ENCODE measurements at regions of chr3 and their contacts with region 1.

Region 1: GRCh38 chr3:48716982-48717746 is at the start of gene IP6K2:
- DNase-seq: peak; percentile 92 to 99 (median 97)
- ATAC-seq: peak; percentile 100
- H3K4me3 ChIP-seq: peak within 1 kb of the TSS; percentile 99
- H3K4me3 Mint-ChIP-seq: peak within 1 kb of the TSS; percentile 94 to 99 (median 98)
- H3K27ac ChIP-seq: peak within 1 kb of the TSS; percentile 84
- H3K27ac Mint-ChIP-seq: peak within 1 kb of the TSS; percentile 83 to 99 (median 96)
- H3K4me1 ChIP-seq: peaks cover 23 to 29% of the 10 kb centered on the region in 2 donors
- H3K4me1 Mint-ChIP-seq: peaks cover 33 to 46% (median 39%) of the 10 kb centered on the region in 7 donors
- H3K27me3 ChIP-seq: no peaks in the 10 kb centered on the region
- H3K27me3 Mint-ChIP-seq: peaks cover 0 to 22% (median 0%) of the 10 kb centered on the region in 5 donors
- total RNA-seq, gene IP6K2: 72.0 to 94.3 (median 85.9) TPM

Region 2: DNA sequence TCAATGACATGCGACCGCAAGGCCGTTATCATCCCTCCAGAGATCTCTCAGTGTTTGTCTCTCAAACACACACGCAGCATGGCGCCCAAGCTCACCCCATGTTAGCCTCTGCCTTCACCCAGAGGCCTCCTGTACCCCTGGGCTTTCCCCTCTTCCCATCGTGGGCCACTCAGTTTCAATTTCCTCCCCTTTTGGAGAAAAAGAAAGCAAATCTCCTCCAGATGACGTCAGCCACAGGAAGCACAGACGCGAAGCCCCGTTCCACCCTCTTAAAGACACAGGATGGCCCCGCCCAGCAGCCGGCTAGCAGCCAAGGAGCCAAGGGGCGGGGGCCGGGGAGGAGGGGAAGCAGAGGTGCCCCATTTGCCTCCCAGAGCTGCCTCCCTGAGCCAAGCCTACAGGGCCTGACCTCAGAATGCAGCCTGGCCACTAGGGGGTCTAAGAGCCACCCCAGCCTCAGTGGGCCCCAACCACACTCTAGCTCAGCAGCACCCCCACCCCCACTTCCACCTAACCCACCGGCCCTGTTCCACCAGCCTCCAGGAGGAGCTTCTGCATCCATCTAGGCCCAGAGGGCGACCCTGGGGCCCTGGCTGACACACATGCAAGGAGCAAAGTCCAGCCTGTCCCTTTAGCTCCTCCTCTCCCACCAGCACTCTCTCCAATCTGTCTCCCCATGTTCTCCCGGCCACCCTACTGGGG is 244.1 kb before region 1 on chr3:
- CTCF ChIA-PET with region 1: no interaction called
- POLR2A ChIA-PET with region 1: no interaction called
- intact Hi-C with region 1: no loop called
- DNase-seq: peak; percentile 79 to 98 (median 95)
- ATAC-seq: peak; percentile 93
- H3K4me3 ChIP-seq: peak overlapping the region; percentile 92
- H3K4me3 Mint-ChIP-seq: peak overlapping the region; percentile 87 to 100 (median 94)
- H3K27ac ChIP-seq: peak overlapping the region; percentile 95
- H3K27ac Mint-ChIP-seq: peak overlapping the region; percentile 90 to 100 (median 99)
- H3K4me1 ChIP-seq: peaks cover 46 to 54% of the 10 kb centered on the region in 2 donors
- H3K4me1 Mint-ChIP-seq: peaks cover 41 to 75% (median 64%) of the 10 kb centered on the region in 7 donors
- H3K27me3 ChIP-seq: no peaks in the 10 kb centered on the region
- H3K27me3 Mint-ChIP-seq: peaks cover 0 to 2% (median 0%) of the 10 kb centered on the region in 5 donors

Region 3: DNA sequence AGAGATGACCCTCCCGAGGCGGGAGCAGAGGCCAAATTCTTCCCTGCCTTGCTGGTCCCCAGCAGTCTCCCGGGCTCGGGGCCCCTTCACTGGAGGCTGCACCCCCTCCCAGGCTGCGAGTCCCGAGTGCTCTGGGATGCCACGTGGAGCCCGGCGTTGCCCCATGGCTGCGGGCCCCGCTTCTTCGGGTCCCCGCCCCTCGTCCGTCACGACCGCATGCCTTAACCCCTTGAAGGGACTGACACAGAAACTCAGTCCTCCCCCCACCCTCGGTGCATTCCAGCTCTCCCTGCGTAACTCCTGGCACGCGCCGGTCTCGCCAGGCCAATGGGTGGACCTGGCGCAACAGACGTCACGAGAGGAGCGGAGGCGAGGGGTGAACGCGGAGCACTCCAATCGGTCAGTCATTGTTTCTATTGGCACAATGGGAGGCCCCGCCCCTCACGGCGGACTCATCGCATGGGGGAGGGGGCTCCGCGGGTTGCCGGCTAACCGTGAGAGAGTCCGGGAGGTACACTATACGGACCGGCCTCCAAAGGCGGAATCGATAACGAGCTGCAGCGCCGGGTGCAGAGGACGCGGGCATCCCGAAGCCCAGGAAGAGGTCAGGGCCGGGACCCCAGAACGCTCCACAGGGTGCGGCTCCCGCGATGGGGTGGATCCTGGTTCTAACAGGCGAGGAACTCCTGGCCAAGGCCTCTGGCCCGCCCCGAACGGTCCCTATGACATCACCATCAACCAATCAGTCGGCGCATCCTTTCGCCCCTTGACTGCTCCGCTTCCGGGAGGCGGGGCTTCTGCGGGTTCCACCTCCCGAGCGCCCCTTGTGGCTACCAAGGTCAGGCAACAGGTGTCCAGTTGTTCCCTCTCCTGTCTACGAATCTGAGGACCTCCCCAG is 53.5 kb before region 1 on chr3:
- CTCF ChIA-PET with region 1: interaction called, 4 read pairs
- POLR2A ChIA-PET with region 1: no interaction called
- intact Hi-C with region 1: loop called (anchors 2 kb)
- DNase-seq: peak; percentile 50 to 94 (median 61)
- ATAC-seq: peak; percentile 88
- H3K4me3 ChIP-seq: peak overlapping the region; percentile 70
- H3K4me3 Mint-ChIP-seq: peak overlapping the region; percentile 34 to 89 (median 70)
- H3K27ac ChIP-seq: no peak overlapping the region
- H3K27ac Mint-ChIP-seq: peak overlapping the region in 1 of 9 donors; percentile 91
- H3K4me1 ChIP-seq: peaks cover 12 to 15% of the 10 kb centered on the region in 2 donors
- H3K4me1 Mint-ChIP-seq: peaks cover 0 to 29% (median 15%) of the 10 kb centered on the region in 7 donors
- H3K27me3 ChIP-seq: peaks cover 0 to 15% of the 10 kb centered on the region in 2 donors
- H3K27me3 Mint-ChIP-seq: peaks cover 4 to 20% (median 13%) of the 10 kb centered on the region in 5 donors

Region 4: GRCh38 chr3:48811524-48811923 is 94.4 kb after region 1 on chr3:
- CTCF ChIA-PET with region 1: no interaction called
- POLR2A ChIA-PET with region 1: no interaction called
- intact Hi-C with region 1: loop called in 1 of 2 experiments (anchors 1 kb)
- DNase-seq: no peak
- ATAC-seq: no peak
- H3K4me3 ChIP-seq: no peak overlapping the region
- H3K4me3 Mint-ChIP-seq: peak overlapping the region in 5 of 10 donors; percentile 16 to 51 (median 33)
- H3K27ac ChIP-seq: peak overlapping the region; percentile 64
- H3K27ac Mint-ChIP-seq: peak overlapping the region; percentile 64 to 97 (median 89)
- H3K4me1 ChIP-seq: peaks cover 16 to 18% of the 10 kb centered on the region in 2 donors
- H3K4me1 Mint-ChIP-seq: peaks cover 22 to 47% (median 40%) of the 10 kb centered on the region in 7 donors
- H3K27me3 ChIP-seq: no peaks in the 10 kb centered on the region
- H3K27me3 Mint-ChIP-seq: no peaks in the 10 kb centered on the region

Region 5: DNA sequence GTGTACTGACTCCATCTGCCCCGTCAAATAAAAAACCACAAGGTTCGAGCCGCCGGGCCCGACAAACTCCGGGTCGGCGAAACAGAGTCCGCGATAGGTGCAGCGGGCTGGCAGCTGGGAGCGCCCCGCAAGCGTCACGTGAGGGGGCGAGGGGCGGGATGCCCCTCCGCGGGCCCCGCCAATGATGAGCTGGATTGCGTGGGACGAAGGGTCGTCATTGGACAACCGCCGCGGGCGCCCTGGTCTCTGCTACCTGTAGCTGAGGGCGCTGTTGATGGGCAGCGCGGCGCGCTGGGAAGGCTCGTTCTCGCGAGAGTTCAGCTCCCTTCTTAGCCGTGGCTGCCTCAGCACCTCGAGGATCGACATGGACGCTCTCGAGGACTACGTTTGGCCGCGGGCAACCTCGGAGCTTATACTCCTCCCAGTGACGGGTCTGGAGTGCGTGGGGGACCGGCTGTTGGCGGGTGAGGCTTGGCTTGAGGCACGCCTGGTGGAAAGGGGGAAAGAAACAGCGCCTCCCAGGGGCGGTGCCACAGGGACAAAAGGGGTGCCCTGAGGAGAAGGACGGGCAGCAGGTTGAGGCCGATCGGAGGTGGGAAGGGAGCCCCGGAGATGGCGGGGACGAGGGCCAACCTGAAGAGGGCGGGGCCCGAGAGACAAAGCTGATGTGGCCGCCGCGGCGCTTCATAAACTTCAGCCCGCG is 290.1 kb after region 1 on chr3 and contains the start of gene WDR6:
- CTCF ChIA-PET with region 1: interaction called, 3 read pairs
- POLR2A ChIA-PET with region 1: interaction called, 4 read pairs
- intact Hi-C with region 1: loop called in 1 of 2 experiments (anchors 1 kb)
- DNase-seq: peak; percentile 86 to 98 (median 96)
- ATAC-seq: peak; percentile 95
- H3K4me3 ChIP-seq: peak within 1 kb of the TSS; percentile 96
- H3K4me3 Mint-ChIP-seq: peak within 1 kb of the TSS; percentile 94 to 100 (median 98)
- H3K27ac ChIP-seq: peak within 1 kb of the TSS; percentile 90
- H3K27ac Mint-ChIP-seq: peak within 1 kb of the TSS; percentile 95 to 100 (median 98)
- H3K4me1 ChIP-seq: peaks cover 8 to 16% of the 10 kb centered on the region in 2 donors
- H3K4me1 Mint-ChIP-seq: peaks cover 14 to 34% (median 28%) of the 10 kb centered on the region in 7 donors
- H3K27me3 ChIP-seq: no peaks in the 10 kb centered on the region
- H3K27me3 Mint-ChIP-seq: no peaks in the 10 kb centered on the region
- total RNA-seq, gene WDR6: 170 to 335 (median 204) TPM

Region 6: DNA sequence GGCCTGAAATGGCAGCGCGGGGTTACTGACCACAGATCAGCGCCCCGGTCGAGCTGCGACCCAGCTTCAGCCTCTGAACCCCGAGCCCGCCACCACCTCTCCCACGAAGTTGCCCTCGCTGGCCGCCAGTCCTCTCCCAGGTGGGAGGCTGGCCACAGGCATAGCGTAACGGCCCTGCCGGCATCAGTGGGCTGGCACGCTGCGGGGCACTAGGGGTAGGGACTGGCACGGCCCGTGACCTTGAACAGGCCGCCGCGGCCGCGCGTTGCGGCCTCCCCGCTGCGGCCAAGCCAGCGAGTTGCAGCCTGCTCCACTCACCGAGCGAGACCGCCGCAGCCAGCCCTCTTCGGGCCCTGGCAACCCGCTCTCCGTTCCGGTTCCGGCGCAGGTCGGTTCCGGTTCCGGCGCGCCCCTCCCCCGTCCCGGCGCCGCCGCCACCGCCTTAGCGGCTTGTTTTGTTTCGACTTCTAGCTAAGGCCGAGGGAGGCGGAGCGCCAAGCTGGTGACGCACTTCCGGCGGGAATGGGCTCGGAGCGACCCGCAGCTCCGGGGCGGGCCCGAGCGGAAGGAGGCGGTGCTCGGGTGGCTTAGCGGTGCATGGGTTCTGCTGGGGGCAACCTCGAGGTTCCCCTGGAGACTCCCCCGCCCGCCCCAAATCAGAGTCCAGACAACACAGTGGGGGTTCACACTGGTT is 403.4 kb after region 1 on chr3 and contains the start of gene USP19:
- CTCF ChIA-PET with region 1: no interaction called
- POLR2A ChIA-PET with region 1: no interaction called
- intact Hi-C with region 1: loop called in 1 of 2 experiments (anchors 5 kb)
- DNase-seq: peak; percentile 92 to 96 (median 95)
- ATAC-seq: peak; percentile 96
- H3K4me3 ChIP-seq: peak within 1 kb of the TSS; percentile 70
- H3K4me3 Mint-ChIP-seq: peak within 1 kb of the TSS; percentile 80 to 97 (median 88)
- H3K27ac ChIP-seq: peak within 1 kb of the TSS; percentile 92
- H3K27ac Mint-ChIP-seq: peak within 1 kb of the TSS; percentile 83 to 96 (median 94)
- H3K4me1 ChIP-seq: peaks cover 17 to 27% of the 10 kb centered on the region in 2 donors
- H3K4me1 Mint-ChIP-seq: peaks cover 0 to 31% (median 25%) of the 10 kb centered on the region in 7 donors
- H3K27me3 ChIP-seq: no peaks in the 10 kb centered on the region
- H3K27me3 Mint-ChIP-seq: no peaks in the 10 kb centered on the region
- total RNA-seq, gene USP19: 60.0 to 106 (median 78.0) TPM

Region 7: GRCh38 chr3:50358911-50359759 is 1642.0 kb after region 1 on chr3 and contains the start of gene TMEM115:
- CTCF ChIA-PET with region 1: no interaction called
- POLR2A ChIA-PET with region 1: no interaction called
- intact Hi-C with region 1: loop called in 1 of 2 experiments (anchors 10 kb)
- DNase-seq: peak; percentile 71 to 99 (median 95)
- ATAC-seq: peak; percentile 100
- H3K4me3 ChIP-seq: peak within 1 kb of the TSS; percentile 88
- H3K4me3 Mint-ChIP-seq: peak within 1 kb of the TSS; percentile 91 to 99 (median 98)
- H3K27ac ChIP-seq: peak within 1 kb of the TSS; percentile 93
- H3K27ac Mint-ChIP-seq: peak within 1 kb of the TSS; percentile 73 to 98 (median 96)
- H3K4me1 ChIP-seq: peaks cover 30% of the 10 kb centered on the region in 2 donors
- H3K4me1 Mint-ChIP-seq: peaks cover 32 to 54% (median 43%) of the 10 kb centered on the region in 7 donors
- H3K27me3 ChIP-seq: no peaks in the 10 kb centered on the region
- H3K27me3 Mint-ChIP-seq: no peaks in the 10 kb centered on the region
- total RNA-seq, gene TMEM115: 17.7 to 32.4 (median 19.9) TPM

Measured in naive thymus-derived CD4-positive, alpha-beta T cell (primary cell).